CD4-positive, alpha-beta memory T cell (primary cell): ENCODE measurements at regions of chr3 and their contacts with region 1.

Region 1: DNA sequence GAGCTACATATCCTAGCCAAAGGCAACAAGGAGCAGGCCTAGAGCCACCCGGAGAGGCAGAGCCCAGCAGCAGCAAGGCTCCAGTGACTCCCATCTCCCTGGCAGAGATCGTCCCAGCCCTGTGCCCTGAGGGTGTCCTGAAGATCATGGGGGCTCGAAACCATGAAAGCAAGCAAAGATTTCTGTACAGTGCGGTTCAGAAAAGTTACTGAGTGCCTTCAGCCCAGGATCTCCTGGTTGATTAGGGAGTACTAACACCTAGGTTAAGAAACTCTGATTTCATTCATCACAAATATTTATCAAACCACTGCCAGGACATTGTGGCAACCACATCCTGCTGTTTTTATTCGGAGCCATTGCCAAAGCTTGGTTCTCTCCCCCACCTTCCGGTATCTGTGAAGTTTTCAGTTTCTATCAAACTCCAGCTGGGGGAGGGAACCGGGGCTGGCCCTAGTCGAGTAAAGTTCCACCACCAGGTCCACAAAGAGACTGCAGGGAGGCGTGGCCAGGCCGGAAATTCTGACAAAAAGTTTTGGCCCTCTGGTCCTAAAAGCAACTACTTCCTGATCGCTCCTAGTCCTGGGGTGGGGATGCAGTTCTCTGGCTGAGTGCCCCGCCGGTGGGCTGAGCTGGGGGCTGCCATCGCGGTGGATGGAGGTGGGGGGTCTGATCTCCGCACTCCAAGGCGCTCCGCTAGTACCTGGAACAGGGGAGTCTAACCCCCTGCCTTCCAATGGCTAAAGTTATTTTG is 1.2 kb downstream of the RAB43 start:
- DNase-seq: peak; percentile 92 to 97 (median 95)
- H3K4me3 ChIP-seq: peak overlapping the region; percentile 73 to 79
- H3K4me3 Mint-ChIP-seq: peak overlapping the region; percentile 92 to 99 (median 94)
- H3K27ac ChIP-seq: peak overlapping the region; percentile 62
- H3K27ac Mint-ChIP-seq: peak overlapping the region; percentile 94 to 99 (median 98)
- H3K4me1 ChIP-seq: peaks cover 54% of the 10 kb centered on the region
- H3K4me1 Mint-ChIP-seq: peaks cover 34 to 70% (median 52%) of the 10 kb centered on the region in 4 donors
- H3K27me3 ChIP-seq: no peaks in the 10 kb centered on the region
- H3K27me3 Mint-ChIP-seq: no peaks in the 10 kb centered on the region

Region 2: DNA sequence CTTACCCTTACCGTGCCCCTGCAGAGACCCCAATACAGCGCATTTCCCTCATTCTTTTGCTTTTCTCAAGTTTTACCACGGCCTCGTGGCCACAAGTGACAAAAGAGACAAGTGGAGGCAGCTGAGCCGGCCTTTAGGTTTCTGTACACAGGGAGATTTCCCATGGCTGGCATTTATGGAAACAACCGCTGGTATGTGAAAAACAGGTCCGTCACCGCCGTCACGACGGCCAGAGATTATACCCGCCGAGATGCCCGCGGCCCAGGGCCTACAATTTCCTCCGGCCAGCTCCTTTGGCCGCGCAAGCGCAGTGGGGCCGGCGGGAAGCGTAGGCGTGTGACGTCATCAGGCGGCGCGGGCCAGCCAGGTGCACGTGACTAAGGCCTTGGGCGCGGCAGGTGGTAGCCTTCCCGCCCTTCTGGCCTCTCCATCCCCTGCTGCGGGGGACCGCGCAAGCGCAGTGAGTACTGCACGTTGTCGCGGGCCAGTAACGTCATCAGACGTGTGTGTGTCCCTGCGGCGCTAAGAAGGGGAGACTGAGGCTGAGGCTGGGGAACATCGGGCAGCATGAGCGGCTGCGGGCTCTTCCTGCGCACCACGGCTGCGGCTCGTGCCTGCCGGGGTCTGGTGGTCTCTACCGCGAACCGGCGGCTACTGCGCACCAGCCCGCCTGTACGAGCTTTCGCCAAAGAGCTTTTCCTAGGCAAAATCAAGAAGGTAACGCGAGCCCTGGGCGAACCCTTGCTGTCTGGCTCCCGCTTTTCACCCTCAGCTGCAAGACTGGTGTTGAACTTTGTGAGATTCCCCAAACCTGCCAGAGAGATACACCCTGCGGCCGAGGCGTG is 241.1 kb before region 1 on chr3 and contains the start of gene ACAD9:
- CTCF ChIA-PET with region 1: no interaction called
- POLR2A ChIA-PET with region 1: interaction called, 3 read pairs
- intact Hi-C with region 1: loop called (anchors 5 kb)
- DNase-seq: peak; percentile 97
- H3K4me3 ChIP-seq: peak within 1 kb of the TSS; percentile 82 to 91
- H3K4me3 Mint-ChIP-seq: peak within 1 kb of the TSS; percentile 85 to 97 (median 94)
- H3K27ac ChIP-seq: peak within 1 kb of the TSS; percentile 92
- H3K27ac Mint-ChIP-seq: peak within 1 kb of the TSS; percentile 92 to 99 (median 99)
- H3K4me1 ChIP-seq: peaks cover 38% of the 10 kb centered on the region
- H3K4me1 Mint-ChIP-seq: peaks cover 47 to 79% (median 61%) of the 10 kb centered on the region in 4 donors
- H3K27me3 ChIP-seq: no peaks in the 10 kb centered on the region
- H3K27me3 Mint-ChIP-seq: no peaks in the 10 kb centered on the region
- total RNA-seq, gene ACAD9: 54.9 to 62.2 TPM

Region 3: DNA sequence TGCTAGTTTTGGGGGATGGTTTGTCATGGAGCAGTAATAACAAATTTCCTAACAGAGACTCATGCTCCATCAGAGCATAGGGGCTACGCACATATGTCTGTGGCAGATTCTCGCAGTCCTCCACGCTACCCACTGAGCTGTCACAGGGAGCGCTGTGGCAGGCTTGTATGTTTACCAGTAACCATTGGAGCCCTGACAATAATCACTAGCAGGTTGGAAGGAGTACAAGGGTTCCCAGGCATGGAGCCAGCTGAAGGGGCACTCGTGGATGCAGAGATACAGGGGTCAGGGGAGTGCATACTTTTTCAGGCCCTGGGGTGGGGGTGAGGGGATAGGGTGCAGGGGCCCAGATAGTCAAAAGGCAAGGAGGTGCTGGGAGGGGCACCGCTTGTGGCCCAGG is 67.8 kb before region 1 on chr3:
- CTCF ChIA-PET with region 1: interaction called, 132 read pairs
- POLR2A ChIA-PET with region 1: interaction called, 60 read pairs
- intact Hi-C with region 1: loop called (anchors 1 kb)
- DNase-seq: no peak
- H3K4me3 ChIP-seq: no peak overlapping the region
- H3K4me3 Mint-ChIP-seq: no peak overlapping the region
- H3K27ac ChIP-seq: no peak overlapping the region
- H3K27ac Mint-ChIP-seq: peak overlapping the region in 3 of 7 donors; percentile 33 to 80 (median 52)
- H3K4me1 ChIP-seq: peaks cover 5% of the 10 kb centered on the region
- H3K4me1 Mint-ChIP-seq: peaks cover 6 to 8% (median 7%) of the 10 kb centered on the region in 4 donors
- H3K27me3 ChIP-seq: no peaks in the 10 kb centered on the region
- H3K27me3 Mint-ChIP-seq: no peaks in the 10 kb centered on the region

Region 4: DNA sequence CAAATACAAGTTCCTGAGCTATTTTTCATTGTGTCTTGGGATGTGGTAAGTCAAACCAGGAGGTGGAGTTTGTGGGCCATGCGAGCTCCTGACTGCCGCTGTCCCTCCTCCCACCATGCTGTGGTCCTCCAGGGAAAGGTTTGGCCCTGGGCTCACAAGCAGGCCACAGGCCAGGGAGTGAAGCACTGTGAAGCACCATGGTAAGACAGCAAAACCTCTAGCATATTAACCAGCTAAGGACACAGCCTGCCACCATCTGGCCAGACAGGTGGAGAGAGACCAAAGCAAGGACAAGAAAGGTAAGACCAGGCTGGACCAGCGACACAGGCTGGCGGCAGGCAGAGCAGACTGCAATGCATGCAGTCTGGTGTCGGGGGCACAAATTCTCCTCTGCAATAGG is 14.1 kb before region 1 on chr3:
- CTCF ChIA-PET with region 1: interaction called, 9 read pairs
- POLR2A ChIA-PET with region 1: interaction called, 64 read pairs
- intact Hi-C with region 1: no loop called
- DNase-seq: no peak
- H3K4me3 ChIP-seq: no peak overlapping the region
- H3K4me3 Mint-ChIP-seq: no peak overlapping the region
- H3K27ac ChIP-seq: no peak overlapping the region
- H3K27ac Mint-ChIP-seq: peak overlapping the region in 1 of 7 donors; percentile 55
- H3K4me1 ChIP-seq: peaks cover 61% of the 10 kb centered on the region
- H3K4me1 Mint-ChIP-seq: peaks cover 43 to 86% (median 61%) of the 10 kb centered on the region in 4 donors
- H3K27me3 ChIP-seq: no peaks in the 10 kb centered on the region
- H3K27me3 Mint-ChIP-seq: no peaks in the 10 kb centered on the region

Region 5: GRCh38 chr3:129160891-129161859 is 40.7 kb after region 1 on chr3 and contains the start of gene ISY1:
- CTCF ChIA-PET with region 1: interaction called, 18 read pairs
- POLR2A ChIA-PET with region 1: interaction called, 3 read pairs
- intact Hi-C with region 1: loop called (anchors 1 kb)
- DNase-seq: peak; percentile 90 to 93 (median 92)
- H3K4me3 ChIP-seq: peak within 1 kb of the TSS; percentile 75 to 94
- H3K4me3 Mint-ChIP-seq: peak within 1 kb of the TSS; percentile 96 to 100 (median 97)
- H3K27ac ChIP-seq: peak within 1 kb of the TSS; percentile 97
- H3K27ac Mint-ChIP-seq: peak within 1 kb of the TSS; percentile 98 to 100 (median 99)
- H3K4me1 ChIP-seq: peaks cover 23% of the 10 kb centered on the region
- H3K4me1 Mint-ChIP-seq: peaks cover 24 to 59% (median 37%) of the 10 kb centered on the region in 4 donors
- H3K27me3 ChIP-seq: no peaks in the 10 kb centered on the region
- H3K27me3 Mint-ChIP-seq: no peaks in the 10 kb centered on the region
- total RNA-seq, gene ISY1: 29.5 to 34.3 TPM

Region 6: GRCh38 chr3:129439817-129440617 is 319.6 kb after region 1 on chr3 and contains the starts of genes IFT122 and MBD4:
- CTCF ChIA-PET with region 1: no interaction called
- POLR2A ChIA-PET with region 1: interaction called, 3 read pairs
- intact Hi-C with region 1: loop called (anchors 1 kb)
- DNase-seq: peak; percentile 98 to 100 (median 100)
- H3K4me3 ChIP-seq: peak within 1 kb of the TSS; percentile 98 to 100
- H3K4me3 Mint-ChIP-seq: peak within 1 kb of the TSS; percentile 90 to 99 (median 94)
- H3K27ac ChIP-seq: peak within 1 kb of the TSS; percentile 91
- H3K27ac Mint-ChIP-seq: peak within 1 kb of the TSS; percentile 94 to 99 (median 98)
- H3K4me1 ChIP-seq: peaks cover 73% of the 10 kb centered on the region
- H3K4me1 Mint-ChIP-seq: peaks cover 45 to 81% (median 68%) of the 10 kb centered on the region in 4 donors
- H3K27me3 ChIP-seq: no peaks in the 10 kb centered on the region
- H3K27me3 Mint-ChIP-seq: no peaks in the 10 kb centered on the region
- total RNA-seq, gene IFT122: 20.0 to 21.8 TPM
- total RNA-seq, gene MBD4: 52.4 to 58.0 TPM

Region 7: DNA sequence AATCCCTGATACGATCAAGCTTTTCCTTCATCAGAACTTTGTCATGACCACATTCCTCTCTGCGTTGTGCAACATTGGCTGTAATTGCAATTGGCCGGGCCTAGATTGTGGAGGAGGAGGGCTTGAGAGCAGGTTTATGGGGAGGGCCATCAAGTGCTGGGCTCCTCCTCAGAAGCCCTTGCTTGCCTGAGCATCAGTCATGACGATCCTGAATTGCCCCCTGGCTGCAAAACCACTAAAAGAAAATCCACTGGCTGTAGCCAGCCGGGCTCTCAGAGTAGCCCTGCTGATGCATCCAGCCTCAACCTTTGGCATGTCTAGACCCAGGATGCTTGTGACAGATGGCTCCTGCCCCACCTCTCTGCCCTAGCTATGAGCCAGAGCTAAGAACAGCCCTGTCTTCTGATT is 840.7 kb after region 1 on chr3:
- CTCF ChIA-PET with region 1: no interaction called
- POLR2A ChIA-PET with region 1: no interaction called
- intact Hi-C with region 1: no loop called
- DNase-seq: no peak
- H3K4me3 ChIP-seq: no peak overlapping the region
- H3K4me3 Mint-ChIP-seq: no peak overlapping the region
- H3K27ac ChIP-seq: no peak overlapping the region
- H3K27ac Mint-ChIP-seq: no peak overlapping the region
- H3K4me1 ChIP-seq: no peaks in the 10 kb centered on the region
- H3K4me1 Mint-ChIP-seq: no peaks in the 10 kb centered on the region
- H3K27me3 ChIP-seq: no peaks in the 10 kb centered on the region
- H3K27me3 Mint-ChIP-seq: peaks cover 6 to 10% of the 10 kb centered on the region in 2 donors